BJ (cell line): ENCODE measurements at regions of chr17 and their contacts with region 1.

Region 1: GRCh38 chr17:74457146-74457819 is 9.2 kb upstream of the CD300A start:
- DNase-seq: no peak
- H3K4me3 ChIP-seq: no peak overlapping the region
- H3K27me3 ChIP-seq: no peaks in the 10 kb centered on the region; the same call in 1 of the 2 replicates
- CTCF ChIP-seq: peak; percentile 94

Region 2: GRCh38 chr17:74362810-74363498 is 94.3 kb before region 1 on chr17:
- CTCF ChIA-PET with region 1: interaction called, 94 read pairs
- POLR2A ChIA-PET with region 1: no interaction called
- DNase-seq: no peak
- H3K4me3 ChIP-seq: no peak overlapping the region
- H3K27me3 ChIP-seq: peaks cover 4% of the 10 kb centered on the region
- CTCF ChIP-seq: no peak

Region 3: DNA sequence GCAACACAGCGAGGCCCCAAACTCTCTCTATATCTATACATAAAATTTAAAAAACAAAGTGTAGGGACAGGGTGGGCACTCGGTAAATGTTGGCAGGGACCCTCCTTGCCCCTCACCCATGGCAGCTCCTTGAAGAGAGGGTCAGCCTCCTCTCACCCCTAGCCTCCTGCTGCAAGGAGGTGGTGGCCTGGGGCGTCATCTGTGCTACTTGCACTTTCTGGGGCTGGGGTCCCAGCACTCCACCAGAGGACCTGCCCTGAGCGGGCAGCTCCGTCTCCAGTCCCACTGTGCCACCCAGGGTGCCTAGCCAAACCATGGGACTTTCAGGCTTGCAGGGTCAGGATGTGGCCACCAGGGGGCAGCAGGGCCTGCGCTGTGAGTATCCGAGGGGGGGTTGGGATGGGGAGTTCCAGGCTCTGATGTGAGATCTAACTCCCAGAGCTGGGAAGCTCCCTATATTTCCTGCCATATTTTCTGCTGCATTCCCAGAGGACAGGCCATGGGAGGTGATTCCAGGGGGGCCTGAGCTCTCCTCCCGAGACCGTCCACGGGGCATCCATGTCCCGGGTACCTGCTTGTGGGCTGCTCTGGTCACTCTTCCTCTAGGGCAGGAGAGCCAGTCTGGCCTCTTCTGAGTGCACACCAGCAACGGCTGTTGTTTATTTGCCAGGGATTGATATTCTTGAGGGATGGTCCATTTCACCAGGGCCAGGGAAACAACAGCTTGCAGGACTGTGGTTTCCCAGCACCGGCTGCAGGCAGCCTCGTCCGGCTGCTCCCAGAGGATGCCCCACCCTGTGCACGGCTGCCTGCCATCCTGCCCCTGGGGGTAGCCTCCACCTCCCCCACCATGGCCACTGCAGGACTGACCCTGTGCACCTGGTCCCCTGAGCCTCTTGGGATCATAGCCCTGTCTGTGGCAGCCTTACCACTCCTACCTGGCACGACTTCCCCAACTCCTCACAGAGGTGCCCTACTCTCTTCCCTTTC is 88.9 kb before region 1 on chr17:
- CTCF ChIA-PET with region 1: interaction called, 94 read pairs
- POLR2A ChIA-PET with region 1: no interaction called
- DNase-seq: no peak
- H3K4me3 ChIP-seq: no peak overlapping the region
- H3K27me3 ChIP-seq: no peaks in the 10 kb centered on the region
- CTCF ChIP-seq: peak; percentile 98

Region 4: GRCh38 chr17:74379495-74380085 is 77.7 kb before region 1 on chr17:
- CTCF ChIA-PET with region 1: interaction called, 22 read pairs
- POLR2A ChIA-PET with region 1: no interaction called
- DNase-seq: no peak
- H3K4me3 ChIP-seq: no peak overlapping the region
- H3K27me3 ChIP-seq: no peaks in the 10 kb centered on the region
- CTCF ChIP-seq: peak; percentile 91

Region 5: GRCh38 chr17:74446551-74447500 is 10.5 kb before region 1 on chr17:
- CTCF ChIA-PET with region 1: interaction called, 13 read pairs
- POLR2A ChIA-PET with region 1: no interaction called
- DNase-seq: no peak
- H3K4me3 ChIP-seq: no peak overlapping the region
- H3K27me3 ChIP-seq: no peaks in the 10 kb centered on the region
- CTCF ChIP-seq: no peak